Ovary (tissue), 10 donors: ENCODE measurements at regions of chr15 and their contacts with region 1.

Region 1: DNA sequence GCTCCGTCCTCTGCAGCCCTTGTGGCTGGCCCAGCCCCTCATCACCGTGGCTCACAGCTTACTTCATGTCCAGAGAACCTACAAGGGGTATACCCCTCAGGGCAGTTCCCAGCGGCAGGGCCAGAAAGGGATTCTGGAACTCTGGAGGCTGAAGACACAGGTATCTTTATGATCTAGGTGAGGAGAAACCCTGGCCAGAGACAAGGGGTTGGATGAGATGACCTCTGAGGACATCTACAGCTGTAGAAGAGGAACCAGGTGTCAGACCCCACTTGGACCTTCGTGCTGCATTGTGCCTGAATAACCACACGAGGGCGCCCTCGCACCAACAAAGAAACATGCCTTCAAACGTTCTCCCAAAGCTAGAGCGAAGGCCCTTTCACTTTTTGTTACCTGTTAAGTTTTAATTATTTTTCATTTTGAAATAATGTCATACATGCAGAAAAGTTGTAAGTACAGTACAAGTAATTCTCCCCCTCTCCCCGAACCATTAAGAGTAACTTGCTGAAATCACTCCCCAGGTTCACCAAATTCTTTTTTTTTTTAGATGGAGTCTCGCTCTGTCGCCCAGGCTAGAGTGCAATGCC is 118.7 kb upstream of the SMAD3 start:
- DNase-seq: peak; percentile 49 to 82 (median 76)
- H3K4me3 ChIP-seq: no peak overlapping the region
- H3K27ac ChIP-seq: no peak overlapping the region
- H3K4me1 ChIP-seq: no peaks in the 10 kb centered on the region
- H3K27me3 ChIP-seq: no peaks in the 10 kb centered on the region
- CTCF ChIP-seq: peak; percentile 80 to 90 (median 87)
- EP300 ChIP-seq: no peak
- POLR2A ChIP-seq: no peak

Region 2: DNA sequence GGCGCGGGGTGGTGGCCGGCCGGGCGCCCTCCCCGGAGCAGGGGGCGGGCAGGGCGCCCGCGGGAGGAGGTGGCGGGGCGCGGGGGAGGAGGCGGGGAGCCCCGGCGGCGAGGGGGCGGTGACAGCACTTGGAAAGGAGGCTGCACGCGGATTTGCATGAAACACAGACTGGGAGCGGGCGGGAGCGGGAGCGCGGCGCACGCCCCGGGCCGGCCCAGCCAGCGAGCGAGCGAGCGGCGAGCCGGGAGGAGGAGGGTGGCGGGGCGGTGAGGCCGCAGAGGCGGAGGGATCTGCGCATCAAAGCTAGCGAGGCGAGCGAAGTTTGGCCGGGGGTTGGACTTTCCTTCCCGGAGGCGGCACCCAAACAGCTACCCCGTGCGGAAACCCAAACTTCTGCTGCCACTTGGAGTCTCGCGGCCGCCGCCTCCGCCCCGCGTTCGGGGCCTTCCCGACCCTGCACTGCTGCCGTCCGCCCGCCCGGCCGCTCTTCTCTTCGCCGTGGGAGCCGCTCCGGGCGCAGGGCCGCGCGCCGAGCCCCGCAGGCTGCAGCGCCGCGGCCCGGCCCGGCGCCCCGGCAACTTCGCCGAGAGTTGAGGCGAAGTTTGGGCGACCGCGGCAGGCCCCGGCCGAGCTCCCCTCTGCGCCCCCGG is 118.9 kb after region 1 on chr15 and contains the start of gene SMAD3:
- intact Hi-C with region 1: loop called in 1 of 4 experiments (anchors 10 kb)
- DNase-seq: peak; percentile 88 to 91 (median 90)
- H3K4me3 ChIP-seq: peak within 1 kb of the TSS; percentile 76
- H3K27ac ChIP-seq: peak within 1 kb of the TSS; percentile 90 to 93
- H3K4me1 ChIP-seq: peaks cover 22% of the 10 kb centered on the region
- H3K27me3 ChIP-seq: no peaks in the 10 kb centered on the region
- CTCF ChIP-seq: no peak
- EP300 ChIP-seq: no peak
- POLR2A ChIP-seq: peak; percentile 54
- total RNA-seq, gene SMAD3: 21.6 to 78.6 (median 46.0) TPM

Region 3: GRCh38 chr15:67303490-67304363 is 357.1 kb after region 1 on chr15:
- intact Hi-C with region 1: loop called (anchors 2 to 5 kb)
- DNase-seq: peak in 1 of 5 donors; percentile 18
- H3K4me3 ChIP-seq: no peak overlapping the region
- H3K27ac ChIP-seq: no peak overlapping the region
- H3K4me1 ChIP-seq: no peaks in the 10 kb centered on the region
- H3K27me3 ChIP-seq: no peaks in the 10 kb centered on the region
- CTCF ChIP-seq: peak in 2 of 3 donors; percentile 53 to 67
- EP300 ChIP-seq: no peak
- POLR2A ChIP-seq: no peak

Region 4: DNA sequence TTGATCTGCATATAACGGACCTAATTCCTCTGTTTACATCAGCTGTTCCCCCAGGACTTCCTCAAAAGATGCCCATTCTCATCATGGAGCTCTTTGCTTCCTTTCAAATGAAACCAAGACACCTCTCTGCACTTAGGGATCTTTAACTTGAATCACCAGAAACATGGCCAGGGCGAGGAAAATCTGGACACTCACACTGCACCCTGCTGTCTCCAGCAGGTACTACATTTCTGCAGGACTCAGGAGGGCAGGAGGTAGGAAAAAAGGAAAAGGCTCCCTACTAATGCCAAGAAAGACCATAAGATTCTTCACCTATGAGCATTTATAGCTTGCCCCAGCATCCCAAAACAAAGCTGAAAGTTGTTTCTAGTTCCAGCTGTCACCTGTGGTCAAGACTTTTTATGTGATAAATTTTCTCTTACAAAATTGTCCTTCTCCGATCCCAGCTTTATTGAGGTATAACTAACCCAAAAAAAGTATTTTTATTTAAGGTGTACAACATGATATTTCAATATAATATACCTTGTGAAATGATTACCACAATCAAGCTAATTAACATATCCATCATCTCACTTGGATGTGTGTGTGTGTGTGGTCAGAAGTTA is 486.9 kb after region 1 on chr15:
- intact Hi-C with region 1: loop called (anchors 5 to 10 kb)
- DNase-seq: peak; percentile 14 to 57 (median 48)
- H3K4me3 ChIP-seq: no peak overlapping the region
- H3K27ac ChIP-seq: no peak overlapping the region
- H3K4me1 ChIP-seq: no peaks in the 10 kb centered on the region
- H3K27me3 ChIP-seq: no peaks in the 10 kb centered on the region
- CTCF ChIP-seq: peak; percentile 43 to 56 (median 49)
- EP300 ChIP-seq: no peak
- POLR2A ChIP-seq: no peak

Region 5: DNA sequence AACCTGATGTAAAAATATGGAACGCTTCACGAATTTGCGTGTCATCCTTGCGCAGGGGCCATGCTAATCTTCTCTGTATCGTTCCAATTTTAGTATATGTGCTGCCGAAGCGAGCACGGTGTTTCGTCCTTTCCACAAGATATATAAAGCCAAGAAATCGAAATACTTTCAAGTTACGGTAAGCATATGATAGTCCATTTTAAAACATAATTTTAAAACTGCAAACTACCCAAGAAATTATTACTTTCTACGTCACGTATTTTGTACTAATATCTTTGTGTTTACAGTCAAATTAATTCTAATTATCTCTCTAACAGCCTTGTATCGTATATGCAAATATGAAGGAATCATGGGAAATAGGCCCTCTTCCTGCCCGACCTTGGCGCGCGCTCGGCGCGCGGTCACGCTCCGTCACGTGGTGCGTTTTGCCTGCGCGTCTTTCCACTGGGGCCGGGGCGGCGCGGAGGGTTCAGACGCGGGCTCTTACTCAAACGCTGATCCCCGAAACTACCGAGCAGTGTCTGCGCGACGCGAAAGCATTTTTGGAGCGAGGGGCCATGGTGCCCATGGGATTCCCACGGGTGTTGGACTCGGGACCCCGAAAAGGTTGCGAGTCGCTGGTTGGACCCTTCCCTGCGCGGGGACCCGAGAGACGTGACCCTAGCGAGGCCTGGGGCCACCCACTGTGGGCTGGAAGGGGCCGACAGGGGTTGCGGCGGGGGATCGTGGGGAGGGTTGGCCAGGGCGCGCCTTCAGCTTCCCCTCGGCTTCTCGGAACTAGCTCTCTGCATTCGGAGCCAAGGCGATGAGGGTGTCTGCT is 893.5 kb after region 1 on chr15 and contains the start of gene RNU6-1:
- intact Hi-C with region 1: loop called in 2 of 4 experiments (anchors 10 kb)
- DNase-seq: peak; percentile 94 to 97 (median 95)
- H3K4me3 ChIP-seq: peak within 1 kb of the TSS; percentile 80
- H3K27ac ChIP-seq: peak within 1 kb of the TSS; percentile 95 to 99
- H3K4me1 ChIP-seq: peaks cover 19% of the 10 kb centered on the region
- H3K27me3 ChIP-seq: no peaks in the 10 kb centered on the region
- CTCF ChIP-seq: no peak
- EP300 ChIP-seq: no peak
- POLR2A ChIP-seq: peak; percentile 92
- total RNA-seq, gene RNU6-1: not detected